Activated CD8-positive, alpha-beta T cell treated with anti-CD3 and anti-CD28 coated beads for 36 hours (primary cell): ENCODE measurements at regions of chr4 and their contacts with region 1.

Region 1: GRCh38 chr4:6716018-6716911 is at the start of gene BLOC1S4:
- DNase-seq: peak; percentile 91
- ATAC-seq: peak; percentile 82
- H3K4me3 Mint-ChIP-seq: peak within 1 kb of the TSS; percentile 90
- H3K27ac Mint-ChIP-seq: peak within 1 kb of the TSS; percentile 92
- H3K4me1 Mint-ChIP-seq: peaks cover 31% of the 10 kb centered on the region
- H3K27me3 Mint-ChIP-seq: no peaks in the 10 kb centered on the region
- CTCF ChIP-seq: no peak
- total RNA-seq, gene BLOC1S4: 19.1 to 21.8 TPM

Region 2: GRCh38 chr4:6362896-6363295 is 353.4 kb before region 1 on chr4:
- CTCF ChIA-PET with region 1: no interaction called
- POLR2A ChIA-PET with region 1: no interaction called
- intact Hi-C with region 1: no loop called
- DNase-seq: peak; percentile 47
- ATAC-seq: no peak
- H3K4me3 Mint-ChIP-seq: no peak overlapping the region
- H3K27ac Mint-ChIP-seq: no peak overlapping the region
- H3K4me1 Mint-ChIP-seq: no peaks in the 10 kb centered on the region
- H3K27me3 Mint-ChIP-seq: peaks cover 3% of the 10 kb centered on the region
- CTCF ChIP-seq: no peak

Region 3: GRCh38 chr4:6701371-6701770 is 14.9 kb before region 1 on chr4:
- CTCF ChIA-PET with region 1: interaction called, 14 read pairs
- POLR2A ChIA-PET with region 1: interaction called, 9 read pairs
- intact Hi-C with region 1: no loop called
- DNase-seq: peak; percentile 63
- ATAC-seq: no peak
- H3K4me3 Mint-ChIP-seq: no peak overlapping the region
- H3K27ac Mint-ChIP-seq: no peak overlapping the region
- H3K4me1 Mint-ChIP-seq: peaks cover 63% of the 10 kb centered on the region
- H3K27me3 Mint-ChIP-seq: no peaks in the 10 kb centered on the region
- CTCF ChIP-seq: peak; percentile 61

Region 4: DNA sequence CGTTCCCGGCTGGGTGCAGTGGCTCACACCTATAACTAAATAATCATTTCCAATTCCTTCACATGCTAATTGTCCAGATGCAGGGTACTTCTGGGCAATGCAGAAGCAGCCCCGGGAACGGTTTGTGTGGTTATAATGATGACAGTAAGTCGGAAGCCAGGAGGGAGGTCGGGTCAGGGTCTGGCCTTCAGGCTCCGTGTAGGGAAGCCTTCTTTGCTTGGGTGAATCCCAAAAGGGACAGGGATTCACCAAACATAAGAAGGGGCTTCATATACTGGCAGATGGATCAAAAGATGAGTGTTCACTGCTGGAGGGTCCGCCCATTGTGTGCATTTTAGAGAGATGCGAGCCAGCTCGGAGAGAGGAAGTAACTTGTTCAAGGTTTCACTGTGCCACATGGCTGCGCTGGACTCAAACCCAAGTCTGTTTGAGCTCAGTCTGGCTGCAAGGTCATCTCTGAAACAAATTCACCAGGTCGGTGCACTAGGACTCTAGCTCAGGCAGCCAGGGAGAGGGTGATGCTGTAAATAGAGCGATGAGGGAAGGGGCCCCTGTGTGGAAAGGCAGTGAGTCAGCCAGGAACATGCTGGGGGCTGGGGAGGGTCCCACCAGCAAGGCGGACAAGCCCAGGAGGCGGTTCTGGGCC is 61.5 kb after region 1 on chr4:
- CTCF ChIA-PET with region 1: interaction called, 10 read pairs
- POLR2A ChIA-PET with region 1: interaction called, 28 read pairs
- intact Hi-C with region 1: no loop called
- DNase-seq: peak; percentile 51
- ATAC-seq: no peak
- H3K4me3 Mint-ChIP-seq: peak overlapping the region; percentile 54
- H3K27ac Mint-ChIP-seq: peak overlapping the region; percentile 93
- H3K4me1 Mint-ChIP-seq: peaks cover 58% of the 10 kb centered on the region
- H3K27me3 Mint-ChIP-seq: no peaks in the 10 kb centered on the region
- CTCF ChIP-seq: no peak

Region 5: DNA sequence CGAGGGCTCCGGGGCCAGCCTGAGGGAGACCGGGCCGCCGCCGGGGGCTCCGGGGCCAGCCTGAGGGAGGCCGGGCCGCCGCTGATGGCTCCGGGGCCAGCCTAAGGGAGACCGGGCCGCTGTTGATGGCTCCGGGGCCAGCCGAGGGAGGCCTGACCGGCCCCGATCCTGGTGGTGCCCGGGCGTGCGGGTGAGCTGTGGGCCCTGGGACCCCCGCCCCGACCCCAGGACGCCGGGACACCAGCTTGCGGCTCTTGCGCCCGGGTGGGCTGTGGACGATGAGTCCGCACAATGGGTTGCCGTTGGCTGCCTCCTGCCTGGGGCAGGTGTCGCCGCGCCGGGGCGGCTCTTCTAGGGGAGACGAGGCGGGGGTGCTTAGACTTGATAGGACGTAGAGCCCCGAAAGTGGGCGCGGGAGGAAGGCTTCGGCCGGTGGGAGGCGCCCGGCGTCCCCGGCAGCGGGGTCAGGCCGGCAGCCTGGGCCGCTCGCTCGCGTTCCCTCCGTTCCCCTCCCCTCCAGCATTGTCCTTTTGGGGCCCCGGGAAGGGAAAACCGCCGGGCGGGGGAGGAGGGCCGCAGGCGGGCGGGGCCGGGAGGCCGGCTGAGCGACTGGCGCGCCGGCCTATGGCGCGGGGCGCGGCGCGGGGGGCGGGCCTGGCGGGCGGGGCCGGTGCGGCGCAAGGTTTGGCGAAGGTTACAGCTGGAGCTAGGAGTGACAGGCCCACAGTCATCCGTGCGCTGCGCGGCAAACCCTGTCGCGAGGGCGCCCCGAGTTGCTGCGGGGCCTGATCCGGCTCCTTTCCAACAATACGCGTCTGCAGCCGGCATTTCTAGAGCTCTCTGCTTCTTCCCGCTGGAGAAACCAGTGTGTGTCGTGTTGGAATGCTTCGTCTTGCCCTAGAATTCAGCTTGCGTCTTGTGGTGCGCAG is 67.1 kb after region 1 on chr4:
- CTCF ChIA-PET with region 1: interaction called, 10 read pairs
- POLR2A ChIA-PET with region 1: interaction called, 28 read pairs
- intact Hi-C with region 1: no loop called
- DNase-seq: peak; percentile 89
- ATAC-seq: peak; percentile 75
- H3K4me3 Mint-ChIP-seq: peak overlapping the region; percentile 84
- H3K27ac Mint-ChIP-seq: peak overlapping the region; percentile 76
- H3K4me1 Mint-ChIP-seq: peaks cover 68% of the 10 kb centered on the region
- H3K27me3 Mint-ChIP-seq: no peaks in the 10 kb centered on the region
- CTCF ChIP-seq: no peak

Region 6: DNA sequence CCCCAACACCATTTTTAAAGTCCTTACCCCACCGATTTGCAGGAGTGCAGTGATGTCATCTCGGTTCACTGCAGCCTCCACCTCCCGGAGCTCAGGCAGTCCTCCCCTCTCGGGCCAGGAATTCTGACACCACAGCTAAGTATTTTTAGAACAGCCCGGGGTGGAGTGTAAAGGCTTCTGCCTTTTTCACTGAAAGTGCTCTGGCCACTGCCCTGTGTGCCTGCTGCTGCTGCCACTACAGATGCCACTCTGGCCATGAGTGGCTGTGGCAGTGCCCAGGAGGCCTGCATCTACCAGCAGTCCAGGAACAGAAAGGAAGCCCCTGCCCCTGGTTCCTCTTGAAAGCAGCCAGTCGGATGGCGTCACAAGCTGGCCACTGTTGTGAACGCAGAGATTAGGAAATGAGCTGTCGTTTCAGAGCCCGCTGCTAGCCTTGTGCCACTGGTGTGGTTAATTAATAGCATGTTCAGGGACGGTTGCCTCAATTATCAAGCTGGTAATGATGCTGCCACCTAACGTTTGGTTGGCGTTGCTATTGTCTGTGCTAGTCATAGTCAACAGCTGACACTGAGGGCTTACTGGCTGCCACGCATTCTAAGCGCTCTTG is 169.8 kb after region 1 on chr4:
- CTCF ChIA-PET with region 1: interaction called, 16 read pairs
- POLR2A ChIA-PET with region 1: interaction called, 4 read pairs
- intact Hi-C with region 1: no loop called
- DNase-seq: peak; percentile 48
- ATAC-seq: peak; percentile 78
- H3K4me3 Mint-ChIP-seq: no peak overlapping the region
- H3K27ac Mint-ChIP-seq: no peak overlapping the region
- H3K4me1 Mint-ChIP-seq: peaks cover 2% of the 10 kb centered on the region
- H3K27me3 Mint-ChIP-seq: no peaks in the 10 kb centered on the region
- CTCF ChIP-seq: peak; percentile 33

Region 7: GRCh38 chr4:6892190-6892908 is 176.1 kb after region 1 on chr4:
- CTCF ChIA-PET with region 1: interaction called, 14 read pairs
- POLR2A ChIA-PET with region 1: no interaction called
- intact Hi-C with region 1: no loop called
- DNase-seq: peak; percentile 66
- ATAC-seq: peak; percentile 84
- H3K4me3 Mint-ChIP-seq: no peak overlapping the region
- H3K27ac Mint-ChIP-seq: peak overlapping the region; percentile 71
- H3K4me1 Mint-ChIP-seq: peaks cover 23% of the 10 kb centered on the region
- H3K27me3 Mint-ChIP-seq: no peaks in the 10 kb centered on the region
- CTCF ChIP-seq: no peak